HAP-1 (cell line): ENCODE measurements at regions of chr5 and their contacts with region 1.

Region 1: GRCh38 chr5:134289509-134290113 is 63.7 kb upstream of the PPP2CA start:
- DNase-seq: peak; percentile 48 to 66
- H3K4me3 ChIP-seq: no peak overlapping the region
- H3K4me1 ChIP-seq: no peaks in the 10 kb centered on the region
- H3K27me3 ChIP-seq: no peaks in the 10 kb centered on the region

Region 2: GRCh38 chr5:134026521-134027268 is 262.9 kb before region 1 on chr5:
- in situ Hi-C with region 1: loop called (anchors 25 kb)
- DNase-seq: peak; percentile 72 to 78
- H3K4me3 ChIP-seq: no peak overlapping the region
- H3K4me1 ChIP-seq: peaks cover 3% of the 10 kb centered on the region; the same call in 1 of the 2 replicates
- H3K27me3 ChIP-seq: 0 out of 2 replicates have a peak, but pooled peaks cover 3% of the 10 kb centered on the region

Region 3: GRCh38 chr5:134184155-134185135 is 105.2 kb before region 1 on chr5:
- in situ Hi-C with region 1: loop called (anchors 5 kb)
- DNase-seq: peak; percentile 46 to 82
- H3K4me3 ChIP-seq: no peak overlapping the region
- H3K4me1 ChIP-seq: no peaks in the 10 kb centered on the region
- H3K27me3 ChIP-seq: no peaks in the 10 kb centered on the region

Region 4: GRCh38 chr5:134394932-134395331 is 105.3 kb after region 1 on chr5:
- in situ Hi-C with region 1: no loop called
- DNase-seq: no peak
- H3K4me3 ChIP-seq: no peak overlapping the region
- H3K4me1 ChIP-seq: peaks cover 5% of the 10 kb centered on the region; the same call in 1 of the 2 replicates
- H3K27me3 ChIP-seq: no peaks in the 10 kb centered on the region